BJ (cell line): ENCODE measurements at regions of chr2 and their contacts with region 1.

Region 1: GRCh38 chr2:96951093-96951654 is 35.2 kb downstream of the FAM178B start:
- DNase-seq: no peak
- H3K4me3 ChIP-seq: no peak overlapping the region
- H3K27me3 ChIP-seq: peaks cover 11% of the 10 kb centered on the region
- CTCF ChIP-seq: peak; percentile 95

Region 2: GRCh38 chr2:96233880-96234316 is 717.3 kb before region 1 on chr2:
- CTCF ChIA-PET with region 1: no interaction called
- POLR2A ChIA-PET with region 1: no interaction called
- DNase-seq: no peak
- H3K4me3 ChIP-seq: no peak overlapping the region
- H3K27me3 ChIP-seq: no peaks in the 10 kb centered on the region
- CTCF ChIP-seq: no peak

Region 3: DNA sequence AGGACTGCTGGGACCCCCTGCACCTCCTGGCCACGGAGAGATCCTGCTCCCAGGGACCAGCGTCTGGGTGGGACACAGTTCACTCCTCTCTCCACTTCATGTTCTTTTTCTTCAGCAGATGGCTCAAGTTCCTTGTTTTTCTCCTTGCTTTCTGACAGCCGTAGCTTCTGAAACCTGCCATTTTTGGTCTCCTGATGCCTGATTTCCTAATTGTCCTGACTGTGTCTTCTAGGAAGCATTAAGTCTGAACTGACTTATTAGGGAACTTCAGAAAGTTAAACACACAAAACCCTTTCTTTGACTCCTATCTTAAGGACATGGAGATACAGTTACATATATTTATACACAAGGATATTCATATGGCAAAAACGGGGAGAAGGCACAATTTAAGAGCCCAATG is 167.8 kb before region 1 on chr2:
- CTCF ChIA-PET with region 1: no interaction called
- POLR2A ChIA-PET with region 1: no interaction called
- DNase-seq: no peak
- H3K4me3 ChIP-seq: no peak overlapping the region
- H3K27me3 ChIP-seq: no peaks in the 10 kb centered on the region
- CTCF ChIP-seq: no peak

Region 4: DNA sequence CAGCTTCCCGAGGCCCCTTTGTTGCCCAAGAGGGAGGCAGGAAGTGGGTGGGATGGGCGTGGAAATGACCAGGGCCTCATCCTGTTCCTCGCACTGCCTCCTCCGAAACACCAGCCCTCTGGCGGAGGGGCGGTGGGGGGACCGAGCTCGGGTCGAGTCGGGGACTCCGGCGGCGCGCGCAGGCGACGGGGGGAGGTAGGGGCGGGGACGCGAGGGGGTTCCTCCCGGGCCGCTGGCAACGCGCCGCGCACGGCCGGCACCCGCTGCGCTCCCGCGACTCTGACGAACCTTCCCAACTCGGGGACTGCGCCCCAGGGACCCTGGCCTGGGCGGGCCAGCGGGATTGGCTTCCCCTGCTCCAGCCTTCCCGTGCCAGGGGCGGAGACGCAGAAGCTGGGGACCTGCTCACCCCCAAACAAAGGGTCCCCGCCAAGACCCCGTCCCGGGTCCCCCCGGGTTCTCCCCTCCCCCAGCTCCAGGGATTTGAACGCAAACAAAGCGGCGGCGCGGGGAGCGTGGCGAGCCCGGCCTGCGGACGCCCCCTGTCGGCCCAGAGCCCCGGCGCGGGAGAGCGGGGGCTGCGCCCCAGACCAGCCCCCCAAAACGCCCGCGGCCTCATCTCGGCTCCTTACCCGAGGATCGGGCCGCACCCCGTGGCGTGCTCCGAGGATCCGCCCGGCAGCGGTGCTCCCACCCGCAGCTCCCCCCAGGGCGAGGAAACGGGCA is 82.5 kb before region 1 on chr2:
- CTCF ChIA-PET with region 1: interaction called, 18 read pairs
- POLR2A ChIA-PET with region 1: no interaction called
- DNase-seq: peak; percentile 37
- H3K4me3 ChIP-seq: peak overlapping the region; percentile 95
- H3K27me3 ChIP-seq: no peaks in the 10 kb centered on the region; the same call in 1 of the 2 replicates
- CTCF ChIP-seq: peak; percentile 47

Region 5: DNA sequence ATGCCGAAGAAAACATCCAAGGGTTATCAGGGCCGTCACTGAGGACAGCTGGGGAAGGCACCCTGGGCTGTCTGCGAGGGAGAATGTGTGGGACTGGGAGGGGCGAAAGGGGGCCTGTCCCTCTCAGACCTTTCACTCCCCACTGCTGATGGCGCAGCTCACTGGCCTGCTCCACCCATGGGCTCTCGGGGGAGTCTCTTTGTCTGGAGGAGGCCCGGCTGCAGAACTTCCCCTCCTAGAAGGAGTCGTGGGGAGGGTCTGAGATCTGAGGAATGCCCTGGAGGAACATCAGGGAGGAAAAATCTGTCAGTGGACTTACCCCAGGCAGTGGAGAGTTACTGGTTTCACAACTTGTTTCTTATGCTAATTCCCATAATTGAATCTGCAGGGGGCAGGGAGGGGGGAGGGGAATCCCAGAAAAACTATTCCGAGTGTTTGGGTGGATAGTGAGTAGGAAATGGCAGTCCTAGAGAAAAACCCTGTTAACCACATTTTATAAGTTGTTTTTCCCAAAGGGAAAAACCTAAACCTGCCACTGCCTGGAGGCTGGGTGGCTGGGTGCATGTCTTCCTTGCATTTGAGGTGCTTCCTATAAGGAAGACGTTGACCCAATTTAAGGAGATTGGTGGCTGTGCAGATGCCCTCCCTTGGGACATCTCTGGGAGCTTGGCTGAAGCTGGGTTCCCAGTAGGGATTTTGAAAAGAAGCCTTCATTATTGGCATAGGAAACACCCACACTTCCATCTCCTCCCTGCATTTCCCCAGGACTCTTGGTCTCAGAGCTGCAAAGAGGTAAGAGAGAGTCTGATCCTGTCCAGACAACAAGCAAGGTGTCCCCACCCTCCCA is 69.6 kb before region 1 on chr2:
- CTCF ChIA-PET with region 1: no interaction called
- POLR2A ChIA-PET with region 1: no interaction called
- DNase-seq: no peak
- H3K4me3 ChIP-seq: no peak overlapping the region
- H3K27me3 ChIP-seq: peaks cover 7% of the 10 kb centered on the region; the same call in 1 of the 2 replicates
- CTCF ChIP-seq: no peak

Region 6: GRCh38 chr2:96927405-96928243 is 23.6 kb before region 1 on chr2:
- CTCF ChIA-PET with region 1: interaction called, 31 read pairs
- POLR2A ChIA-PET with region 1: no interaction called
- DNase-seq: no peak
- H3K4me3 ChIP-seq: peak overlapping the region; percentile 5; the same call in 1 of the 2 replicates
- H3K27me3 ChIP-seq: peaks cover 21% of the 10 kb centered on the region
- CTCF ChIP-seq: peak; percentile 32; the same call in 1 of the 2 replicates

Region 7: GRCh38 chr2:96933305-96934181 is 17.6 kb before region 1 on chr2:
- CTCF ChIA-PET with region 1: interaction called, 51 read pairs
- POLR2A ChIA-PET with region 1: no interaction called
- DNase-seq: no peak
- H3K4me3 ChIP-seq: no peak overlapping the region
- H3K27me3 ChIP-seq: peaks cover 10% of the 10 kb centered on the region
- CTCF ChIP-seq: no peak

Region 8: DNA sequence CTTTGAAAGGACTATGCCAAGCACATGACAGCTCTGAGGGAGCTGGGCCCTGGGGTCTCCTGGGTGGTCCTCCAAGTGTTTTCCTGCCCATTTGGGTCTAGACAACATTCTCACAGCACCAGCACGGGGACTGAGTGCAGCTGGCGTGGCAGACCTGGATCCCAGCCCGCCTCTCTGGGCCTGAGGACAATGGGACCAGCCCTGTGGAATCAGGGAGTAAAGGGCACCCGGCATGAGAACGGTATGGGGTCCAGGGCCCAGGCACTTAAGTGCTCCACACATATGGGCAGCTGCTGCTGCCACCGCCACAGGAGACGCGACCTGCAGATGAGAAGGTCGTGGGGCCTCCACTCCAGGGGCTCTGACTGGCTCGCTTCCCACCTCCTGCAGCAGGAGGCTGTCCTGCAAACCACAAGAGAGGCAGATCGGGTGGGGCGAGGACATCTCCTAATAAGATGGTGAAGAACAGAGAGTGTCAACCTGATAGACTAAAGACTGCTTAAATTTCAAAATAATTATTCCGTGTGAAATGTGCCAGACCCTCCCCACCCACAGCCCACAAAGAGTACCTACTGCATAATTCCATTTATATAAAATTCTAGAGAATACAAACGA is 11.1 kb before region 1 on chr2:
- CTCF ChIA-PET with region 1: interaction called, 51 read pairs
- POLR2A ChIA-PET with region 1: no interaction called
- DNase-seq: no peak
- H3K4me3 ChIP-seq: no peak overlapping the region
- H3K27me3 ChIP-seq: peaks cover 13% of the 10 kb centered on the region
- CTCF ChIP-seq: no peak